Sigmoid colon (tissue), 7 donors: ENCODE measurements at regions of chr2 and their contacts with region 1.

Region 1: DNA sequence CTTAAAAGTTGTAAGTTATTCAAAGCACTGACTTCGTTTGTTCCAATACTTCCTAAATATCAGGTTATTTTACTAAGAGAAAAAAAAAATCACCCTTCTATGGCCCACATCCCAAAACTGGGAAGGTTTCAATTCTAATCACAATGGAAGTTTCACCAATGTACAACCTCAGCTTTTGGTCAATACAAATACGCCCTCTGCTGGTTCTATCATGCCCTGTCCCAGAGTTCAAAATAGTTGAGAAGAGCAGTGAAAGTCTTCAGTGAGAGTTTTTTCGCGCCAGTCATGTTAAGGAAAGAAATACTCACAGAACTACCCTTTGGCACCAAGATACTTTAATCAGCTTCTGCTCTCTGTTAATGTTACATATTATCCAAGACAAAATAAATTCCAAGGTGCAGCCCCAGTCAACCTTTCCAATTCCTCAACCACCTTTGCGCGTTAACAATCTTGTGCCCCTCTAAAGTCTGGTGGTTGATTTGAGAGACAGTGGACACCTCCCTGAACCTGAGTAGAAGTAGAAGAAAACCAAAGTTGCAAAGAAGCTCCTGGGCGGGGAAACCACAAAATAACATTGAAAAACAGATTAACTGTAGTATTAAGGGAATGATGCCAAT is 59.9 kb downstream of the SUMO1 start:
- DNase-seq: peak; percentile 82
- H3K4me3 ChIP-seq: no peak overlapping the region
- H3K27ac ChIP-seq: no peak overlapping the region
- H3K4me1 ChIP-seq: no peaks in the 10 kb centered on the region
- H3K27me3 ChIP-seq: no peaks in the 10 kb centered on the region
- CTCF ChIP-seq: peak; percentile 69 to 80 (median 74)
- EP300 ChIP-seq: no peak
- POLR2A ChIP-seq: no peak

Region 2: GRCh38 chr2:201795607-201796477 is 382.6 kb before region 1 on chr2:
- intact Hi-C with region 1: loop called (anchors 2 kb)
- DNase-seq: no peak
- H3K4me3 ChIP-seq: no peak overlapping the region
- H3K27ac ChIP-seq: no peak overlapping the region
- H3K4me1 ChIP-seq: no peaks in the 10 kb centered on the region
- H3K27me3 ChIP-seq: no peaks in the 10 kb centered on the region
- CTCF ChIP-seq: peak; percentile 22 to 53 (median 52)
- EP300 ChIP-seq: no peak
- POLR2A ChIP-seq: no peak

Region 3: DNA sequence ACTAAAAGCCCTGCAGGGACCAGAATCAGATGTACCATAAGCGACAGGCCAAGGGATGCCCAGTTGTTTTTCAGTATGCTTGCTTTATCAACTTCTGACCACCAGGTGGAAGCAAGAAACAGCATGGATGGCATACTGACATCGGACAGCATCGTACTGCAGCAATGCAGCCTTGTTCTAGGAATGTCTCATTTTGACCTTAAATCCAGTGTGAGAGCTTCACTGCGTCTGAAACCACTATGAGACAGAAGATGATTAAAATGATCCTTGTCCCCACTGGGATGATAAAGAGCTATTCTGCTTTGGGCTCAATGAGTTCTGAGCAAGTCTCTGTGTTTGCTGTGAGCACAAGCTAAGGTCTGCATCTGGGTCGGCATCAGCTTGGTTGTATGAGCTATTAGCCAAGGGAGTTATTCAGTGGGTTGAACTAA is 317.8 kb before region 1 on chr2:
- intact Hi-C with region 1: loop called (anchors 1 kb)
- DNase-seq: peak; percentile 68
- H3K4me3 ChIP-seq: no peak overlapping the region
- H3K27ac ChIP-seq: no peak overlapping the region
- H3K4me1 ChIP-seq: peaks cover 0 to 24% (median 11%) of the 10 kb centered on the region in 4 donors
- H3K27me3 ChIP-seq: no peaks in the 10 kb centered on the region
- CTCF ChIP-seq: peak; percentile 68 to 85 (median 84)
- EP300 ChIP-seq: no peak
- POLR2A ChIP-seq: no peak

Region 4: DNA sequence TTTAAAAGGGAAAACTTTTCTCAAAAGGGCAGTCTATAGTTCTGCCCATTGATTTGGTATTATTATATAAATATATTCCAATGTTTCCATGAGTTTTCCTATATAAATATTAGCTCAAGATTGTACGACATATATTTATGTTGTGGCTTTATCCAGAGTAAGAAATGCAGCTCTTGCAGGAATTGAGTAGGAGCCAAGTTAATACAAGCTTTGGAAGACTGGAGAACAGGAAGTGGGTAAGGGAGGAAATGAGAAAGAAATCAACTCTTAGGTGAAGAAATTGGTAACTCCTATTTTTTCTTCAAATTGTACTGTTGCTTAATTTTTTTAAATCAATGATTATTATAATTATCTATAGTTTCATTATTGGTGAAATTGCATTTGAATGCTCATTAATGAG is 350.9 kb after region 1 on chr2:
- intact Hi-C with region 1: no loop called
- DNase-seq: no peak
- H3K4me3 ChIP-seq: no peak overlapping the region
- H3K27ac ChIP-seq: no peak overlapping the region
- H3K4me1 ChIP-seq: no peaks in the 10 kb centered on the region
- H3K27me3 ChIP-seq: no peaks in the 10 kb centered on the region
- CTCF ChIP-seq: no peak
- EP300 ChIP-seq: no peak
- POLR2A ChIP-seq: no peak